ENCODE measurements at regions of chr5 and their contacts with region 1.

Region 1: DNA sequence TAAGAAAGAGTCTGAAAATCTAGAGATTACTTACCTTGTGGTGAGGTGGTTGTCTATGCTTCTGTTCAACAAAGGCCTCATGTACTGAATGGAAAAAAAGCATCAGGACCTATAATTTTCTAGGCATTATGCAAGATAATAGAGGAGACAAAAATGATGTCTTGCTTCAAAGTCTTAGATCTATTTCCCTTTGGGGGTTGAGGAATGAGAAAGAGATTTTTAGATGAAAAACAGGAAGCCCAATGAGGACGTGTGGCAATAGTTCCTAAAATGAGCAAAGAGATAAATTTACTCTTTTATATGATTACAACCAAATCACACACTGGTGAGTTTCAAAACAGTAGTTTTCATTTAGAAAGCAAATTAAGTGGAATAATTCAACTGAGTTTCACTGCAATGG is 99.5 kb downstream of the GHR start:
- DNase-seq: no peak
- H3K4me3 ChIP-seq: no peak overlapping the region
- H3K27ac ChIP-seq: no peak overlapping the region
- H3K4me1 ChIP-seq: no peaks in the 10 kb centered on the region
- H3K27me3 ChIP-seq: no peaks in the 10 kb centered on the region
- CTCF ChIP-seq: no peak
- POLR2A ChIP-seq: no peak

Region 2: DNA sequence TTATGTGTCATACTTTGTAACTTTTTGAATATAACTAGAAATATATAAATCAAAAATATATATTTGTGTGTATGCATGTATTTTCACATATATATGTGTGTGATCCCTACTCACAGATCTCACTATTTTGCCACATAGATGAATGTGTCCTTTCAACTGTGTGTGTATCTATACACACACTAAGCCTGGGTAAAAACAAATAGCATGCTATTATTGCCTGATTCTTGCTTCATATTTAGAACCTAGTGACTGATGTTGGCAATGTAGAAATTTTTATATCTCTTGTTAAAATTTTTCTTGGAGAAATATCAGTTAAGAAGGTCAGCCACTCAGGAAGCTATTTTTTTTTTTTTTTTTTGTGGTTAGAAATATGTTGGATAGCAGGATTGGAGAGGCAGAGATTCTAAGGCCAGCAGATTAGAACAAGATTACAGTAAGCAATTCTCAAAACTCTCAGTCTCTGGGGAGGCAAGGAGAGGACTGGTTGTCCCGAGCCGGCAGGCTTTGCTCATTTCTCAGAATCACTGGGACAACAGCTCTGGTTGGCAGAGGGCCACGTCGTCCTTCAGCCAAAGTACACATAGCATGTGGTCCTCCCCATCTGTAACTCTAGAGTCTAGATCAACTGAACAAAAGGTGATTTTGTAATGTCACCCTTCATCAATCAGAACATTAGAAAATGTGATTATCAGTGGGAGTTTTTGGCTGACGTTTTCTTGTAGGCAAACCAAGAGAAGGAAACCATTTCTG is 1329.2 kb before region 1 on chr5:
- intact Hi-C with region 1: no loop called
- DNase-seq: peak; percentile 90 to 96
- H3K4me3 ChIP-seq: no peak overlapping the region
- H3K27ac ChIP-seq: peak overlapping the region; percentile 66 to 80
- H3K4me1 ChIP-seq: no peaks in the 10 kb centered on the region
- H3K27me3 ChIP-seq: no peaks in the 10 kb centered on the region
- CTCF ChIP-seq: no peak
- POLR2A ChIP-seq: no peak

Region 3: DNA sequence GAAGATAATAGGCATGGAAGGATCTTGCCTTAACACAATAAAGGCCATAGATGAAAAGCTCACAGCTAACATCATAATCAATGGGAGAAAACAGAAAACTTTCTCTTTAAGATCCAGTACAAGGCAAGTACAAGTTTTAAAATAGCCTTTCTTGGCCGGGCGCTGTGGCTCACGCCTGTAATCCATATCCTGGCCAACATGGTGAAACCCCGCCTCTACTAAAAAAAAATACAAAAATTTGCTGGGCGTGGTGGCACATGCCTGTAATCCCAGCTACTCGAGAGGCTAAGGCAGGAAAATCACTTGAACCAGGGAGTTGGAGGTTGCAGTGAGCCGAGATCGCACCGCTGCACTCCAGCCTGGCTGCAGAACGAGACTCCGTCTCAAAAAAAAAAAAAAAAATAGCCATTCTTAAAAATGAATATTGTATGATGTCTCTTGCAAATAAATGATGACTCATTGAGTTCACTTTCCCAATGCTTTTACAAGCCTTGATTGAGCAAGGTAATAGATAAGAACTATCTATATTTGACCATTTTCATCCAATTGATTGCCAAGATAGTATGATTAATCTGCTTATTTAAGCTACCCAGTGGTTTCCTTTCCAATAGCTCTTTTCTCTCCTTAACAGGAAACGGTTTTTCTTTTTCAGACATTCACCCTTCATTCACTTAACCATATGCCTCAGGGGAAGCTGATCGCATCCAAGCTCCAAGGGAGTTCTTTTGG is 249.6 kb after region 1 on chr5:
- intact Hi-C with region 1: loop called (anchors 5 kb)
- DNase-seq: no peak
- H3K4me3 ChIP-seq: peak overlapping the region in 2 of 3 donors; percentile 1 to 36
- H3K27ac ChIP-seq: no peak overlapping the region
- H3K4me1 ChIP-seq: no peaks in the 10 kb centered on the region
- H3K27me3 ChIP-seq: no peaks in the 10 kb centered on the region
- CTCF ChIP-seq: no peak
- POLR2A ChIP-seq: no peak

Measured in breast epithelium (tissue), 4 donors.